A549 (cell line): ENCODE measurements at regions of chr11 and their contacts with region 1.

Region 1: GRCh38 chr11:109939166-109939810 is 153.9 kb upstream of the ZC3H12C start:
- DNase-seq: peak; percentile 38 to 80
- ATAC-seq: peak; percentile 91 to 92
- H3K4me3 ChIP-seq: no peak overlapping the region
- H3K27ac ChIP-seq: peak overlapping the region in 1 of 2 experiments; percentile 60; a peak in 2 of 6 replicates
- H3K4me1 ChIP-seq: peaks cover 19% of the 10 kb centered on the region; the same call in 2 of the 3 replicates
- CTCF ChIP-seq: peak; percentile 71
- EP300 ChIP-seq: no peak
- POLR2A ChIP-seq: no peak
- RAD21 ChIP-seq: peak; percentile 85 to 86

Region 2: GRCh38 chr11:108697872-108698473 is 1241.3 kb before region 1 on chr11:
- CTCF ChIA-PET with region 1: interaction called, 13 read pairs
- POLR2A ChIA-PET with region 1: interaction called, 3 read pairs
- DNase-seq: peak; percentile 38 to 67
- ATAC-seq: peak; percentile 93 to 94
- H3K4me3 ChIP-seq: no peak overlapping the region
- H3K27ac ChIP-seq: no peak overlapping the region
- H3K4me1 ChIP-seq: 0 out of 3 replicates have a peak, but pooled peaks cover 8% of the 10 kb centered on the region
- CTCF ChIP-seq: peak; percentile 85
- EP300 ChIP-seq: no peak
- POLR2A ChIP-seq: no peak
- RAD21 ChIP-seq: peak; percentile 92 to 93

Region 3: DNA sequence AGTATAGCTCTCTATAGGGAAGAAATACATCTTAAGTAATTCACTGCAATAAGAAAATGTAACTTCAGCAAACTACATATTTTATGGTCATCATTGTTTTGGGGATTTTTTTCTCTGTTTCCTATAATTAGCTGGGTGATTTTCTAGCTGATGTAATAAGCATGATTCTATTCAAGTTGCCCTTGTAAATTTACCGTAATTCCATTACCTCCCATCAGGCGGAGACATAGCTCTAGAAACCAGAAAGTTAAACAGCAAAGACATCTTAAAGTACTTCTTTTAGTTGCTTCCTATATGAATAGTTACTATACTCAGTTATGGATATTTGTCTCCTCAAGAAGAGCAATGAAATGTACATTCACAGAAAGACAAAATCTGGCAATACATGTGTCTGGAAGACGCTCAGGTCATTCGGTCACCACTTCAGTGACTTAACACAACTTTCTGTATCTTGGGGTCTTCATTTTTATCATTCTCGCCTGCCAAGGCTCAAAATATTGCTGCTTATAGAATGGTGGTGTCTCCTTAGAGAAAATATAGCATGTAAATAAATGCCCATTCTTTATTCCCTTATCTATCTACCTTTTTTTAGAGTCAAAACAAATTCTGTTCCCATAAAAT is 86.0 kb before region 1 on chr11:
- CTCF ChIA-PET with region 1: interaction called, 18 read pairs
- POLR2A ChIA-PET with region 1: interaction called, 3 read pairs
- DNase-seq: peak in 1 of 2 experiments; percentile 67
- ATAC-seq: peak in 1 of 2 experiments; percentile 56; a peak in 2 of 6 replicates
- H3K4me3 ChIP-seq: no peak overlapping the region
- H3K27ac ChIP-seq: no peak overlapping the region
- H3K4me1 ChIP-seq: peaks cover 14% of the 10 kb centered on the region
- CTCF ChIP-seq: peak; percentile 52
- EP300 ChIP-seq: no peak
- POLR2A ChIP-seq: no peak
- RAD21 ChIP-seq: peak; percentile 67 to 76